Activated CD8-positive, alpha-beta T cell treated with anti-CD3 and anti-CD28 coated beads, Interleukin-2, amount 10 ng/mL, durations not matched to agents 7 days and 5 days (primary cell): ENCODE measurements at regions of chr7 and their contacts with region 1.

Region 1: DNA sequence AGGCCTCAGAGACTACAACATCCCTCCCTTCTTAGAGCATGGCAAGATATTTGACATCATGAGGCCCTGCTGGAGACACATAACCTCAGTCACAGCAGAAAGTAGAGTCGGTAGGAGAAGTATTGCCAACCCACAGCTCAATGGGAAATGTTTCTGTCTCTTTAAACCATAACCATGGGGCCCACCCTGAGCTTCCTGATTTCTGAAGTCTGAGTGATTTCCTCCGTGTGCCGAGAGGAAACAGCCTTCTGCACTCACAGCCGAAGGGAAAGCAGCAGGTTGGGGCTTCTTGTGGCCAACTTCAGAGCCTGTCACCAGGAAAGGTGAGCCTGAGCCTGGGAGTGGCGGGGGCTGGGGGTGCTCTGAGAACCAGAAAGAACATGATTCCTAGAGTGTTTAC is at the start of gene GIMAP1:
- DNase-seq: peak; percentile 71
- ATAC-seq: peak; percentile 85
- H3K4me3 Mint-ChIP-seq: peak within 1 kb of the TSS; percentile 97
- H3K27ac Mint-ChIP-seq: peak within 1 kb of the TSS; percentile 87
- H3K4me1 Mint-ChIP-seq: peaks cover 51% of the 10 kb centered on the region
- H3K27me3 Mint-ChIP-seq: no peaks in the 10 kb centered on the region
- total RNA-seq, gene GIMAP1: 19.0 to 20.2 TPM

Region 2: GRCh38 chr7:150685219-150686029 is 30.9 kb before region 1 on chr7 and contains the start of gene GIMAP2:
- CTCF ChIA-PET with region 1: interaction called, 11 read pairs
- POLR2A ChIA-PET with region 1: interaction called, 14 read pairs
- DNase-seq: peak; percentile 50
- ATAC-seq: peak; percentile 89
- H3K4me3 Mint-ChIP-seq: peak within 1 kb of the TSS; percentile 95
- H3K27ac Mint-ChIP-seq: peak within 1 kb of the TSS; percentile 97
- H3K4me1 Mint-ChIP-seq: peaks cover 76% of the 10 kb centered on the region
- H3K27me3 Mint-ChIP-seq: no peaks in the 10 kb centered on the region
- total RNA-seq, gene GIMAP2: 79.0 to 82.9 TPM

Region 3: GRCh38 chr7:150727381-150727780 is 11.0 kb after region 1 on chr7:
- CTCF ChIA-PET with region 1: interaction called, 21 read pairs
- POLR2A ChIA-PET with region 1: interaction called, 21 read pairs
- DNase-seq: no peak
- ATAC-seq: no peak
- H3K4me3 Mint-ChIP-seq: no peak overlapping the region
- H3K27ac Mint-ChIP-seq: peak overlapping the region; percentile 4
- H3K4me1 Mint-ChIP-seq: peaks cover 57% of the 10 kb centered on the region
- H3K27me3 Mint-ChIP-seq: no peaks in the 10 kb centered on the region